Aorta (tissue), 5 donors: ENCODE measurements at regions of chr22 and their contacts with region 1.

Region 1: DNA sequence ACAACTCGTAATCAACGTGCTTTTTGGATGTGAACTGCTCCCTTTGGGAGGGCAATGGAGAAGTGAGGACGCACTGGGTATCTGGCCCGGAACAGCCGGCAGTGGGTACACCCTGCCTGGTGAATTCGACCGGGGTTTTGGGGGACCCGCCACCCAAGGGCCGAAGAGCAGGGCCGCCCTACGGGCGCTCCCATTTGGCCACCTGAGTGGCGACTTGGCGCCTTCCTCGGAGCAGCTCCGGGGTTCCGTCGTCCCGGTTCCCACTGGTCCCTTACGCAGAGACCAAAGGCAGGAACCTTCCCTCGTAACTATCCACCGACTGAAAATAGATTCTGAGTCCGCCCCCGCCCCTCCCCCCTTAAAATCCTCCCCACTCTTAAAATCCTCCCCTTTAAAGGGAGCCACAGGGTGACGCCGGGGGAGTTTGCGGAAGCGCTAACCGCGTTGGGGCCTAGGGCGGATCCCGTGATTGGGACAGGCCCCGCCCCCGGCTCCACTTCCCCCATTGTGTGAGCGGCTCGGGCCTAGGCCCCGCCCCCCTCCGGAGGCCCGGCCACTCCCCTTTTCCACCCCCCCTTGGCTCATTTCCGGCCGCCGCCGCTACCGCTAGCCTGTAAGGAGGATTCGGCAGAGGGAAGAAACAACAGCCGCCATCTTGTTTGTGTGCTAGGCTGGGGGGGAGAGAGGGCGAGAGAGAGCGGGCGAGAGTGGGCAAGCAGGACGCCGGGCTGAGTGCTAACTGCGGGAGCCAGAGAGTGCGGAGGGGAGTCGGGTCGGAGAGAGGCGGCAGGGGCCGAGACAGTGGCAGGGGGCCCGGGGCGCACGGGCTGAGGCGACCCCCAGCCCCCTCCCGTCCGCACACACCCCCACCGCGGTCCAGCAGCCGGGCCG is 1.0 kb upstream of the EP300 start:
- DNase-seq: peak; percentile 99 to 100
- ATAC-seq: peak; percentile 98
- H3K4me3 ChIP-seq: peak overlapping the region; percentile 98 to 100
- H3K27ac ChIP-seq: peak overlapping the region; percentile 98 to 99
- H3K4me1 ChIP-seq: peaks cover 0 to 3% of the 10 kb centered on the region in 2 donors
- H3K27me3 ChIP-seq: no peaks in the 10 kb centered on the region

Region 2: DNA sequence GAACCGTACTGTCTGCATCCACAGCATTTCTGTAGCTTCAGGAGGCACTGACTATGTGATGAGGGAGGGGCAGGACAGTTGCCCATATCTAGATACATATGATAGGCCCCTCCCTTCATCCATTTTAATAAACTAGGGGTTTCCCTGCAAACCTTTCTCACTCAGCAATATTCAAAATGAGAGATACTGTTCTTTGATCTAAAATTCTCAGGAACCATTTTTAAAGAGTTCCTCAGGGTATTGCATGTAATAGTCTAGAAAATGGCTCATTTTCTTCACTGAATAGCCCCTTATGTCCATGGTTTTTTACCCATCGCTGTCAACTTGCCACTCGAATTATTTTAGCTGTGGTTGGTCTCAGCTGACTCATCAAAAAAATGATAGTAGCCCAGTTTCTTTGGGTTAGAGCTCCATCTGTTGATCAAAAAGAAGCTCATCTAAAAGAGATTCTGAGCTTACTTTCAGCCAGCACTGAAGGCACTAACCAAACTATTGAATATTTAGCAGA is 192.5 kb before region 1 on chr22:
- intact Hi-C with region 1: no loop called
- DNase-seq: no peak
- ATAC-seq: no peak
- H3K4me3 ChIP-seq: no peak overlapping the region
- H3K27ac ChIP-seq: no peak overlapping the region
- H3K4me1 ChIP-seq: no peaks in the 10 kb centered on the region
- H3K27me3 ChIP-seq: no peaks in the 10 kb centered on the region

Region 3: DNA sequence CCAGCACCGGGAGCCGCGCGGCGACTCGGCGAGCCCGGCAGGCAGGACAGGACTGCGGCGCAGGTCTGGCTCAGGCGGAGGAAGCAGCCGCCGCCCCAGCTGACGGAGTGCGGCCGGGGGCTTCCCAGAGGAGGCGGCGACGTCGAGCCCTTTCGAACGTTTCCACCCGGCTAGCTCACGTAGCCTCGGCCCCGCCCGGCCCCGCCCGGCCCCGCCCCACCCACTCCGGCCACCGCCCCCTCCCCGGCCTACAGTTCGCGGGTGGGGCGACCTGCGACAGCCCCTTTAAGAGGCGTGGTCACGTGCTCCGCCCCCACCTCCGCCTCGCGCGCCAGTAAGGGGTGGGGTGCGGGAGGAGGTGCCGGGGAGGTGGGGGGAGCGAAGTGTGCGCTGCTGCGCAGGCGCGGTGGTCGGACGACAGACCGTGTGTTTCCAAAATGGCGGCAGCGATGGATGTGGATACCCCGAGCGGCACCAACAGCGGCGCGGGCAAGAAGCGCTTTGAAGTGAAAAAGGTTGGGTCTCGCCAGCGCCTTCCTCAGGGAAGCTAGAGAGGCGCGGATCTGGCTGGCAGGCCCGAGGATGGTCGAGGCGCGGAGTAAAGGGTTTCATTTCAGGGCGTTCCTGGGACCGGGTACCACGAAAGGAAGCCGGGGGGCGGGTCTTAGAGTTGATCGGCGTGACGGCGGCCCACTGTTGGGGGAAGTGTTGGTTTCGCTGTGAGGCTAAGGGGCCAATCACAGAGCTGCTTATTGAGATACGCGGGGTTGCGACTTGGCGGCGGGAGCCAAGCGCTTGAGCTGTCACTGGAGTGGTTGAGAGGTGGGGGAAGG is 140.2 kb before region 1 on chr22 and contains the start of gene RBX1:
- intact Hi-C with region 1: loop called (anchors 1 to 2 kb)
- DNase-seq: peak; percentile 99
- ATAC-seq: peak; percentile 99
- H3K4me3 ChIP-seq: peak within 1 kb of the TSS; percentile 84 to 87
- H3K27ac ChIP-seq: peak within 1 kb of the TSS; percentile 36 to 83
- H3K4me1 ChIP-seq: no peaks in the 10 kb centered on the region
- H3K27me3 ChIP-seq: no peaks in the 10 kb centered on the region
- total RNA-seq, gene RBX1: 36.2 to 40.8 TPM

Region 4: GRCh38 chr22:41022470-41023298 is 68.7 kb before region 1 on chr22:
- intact Hi-C with region 1: loop called in 1 of 2 experiments (anchors 1 kb)
- DNase-seq: peak; percentile 94 to 96
- ATAC-seq: peak; percentile 95
- H3K4me3 ChIP-seq: peak overlapping the region; percentile 77 to 82
- H3K27ac ChIP-seq: peak overlapping the region; percentile 31 to 70
- H3K4me1 ChIP-seq: no peaks in the 10 kb centered on the region
- H3K27me3 ChIP-seq: no peaks in the 10 kb centered on the region

Region 5: GRCh38 chr22:41197038-41197972 is 105.9 kb after region 1 on chr22:
- intact Hi-C with region 1: loop called in 1 of 2 experiments (anchors 10 kb)
- DNase-seq: peak; percentile 89 to 95
- ATAC-seq: peak; percentile 92
- H3K4me3 ChIP-seq: peak overlapping the region; percentile 29 to 58
- H3K27ac ChIP-seq: no peak overlapping the region
- H3K4me1 ChIP-seq: no peaks in the 10 kb centered on the region
- H3K27me3 ChIP-seq: no peaks in the 10 kb centered on the region

Region 6: DNA sequence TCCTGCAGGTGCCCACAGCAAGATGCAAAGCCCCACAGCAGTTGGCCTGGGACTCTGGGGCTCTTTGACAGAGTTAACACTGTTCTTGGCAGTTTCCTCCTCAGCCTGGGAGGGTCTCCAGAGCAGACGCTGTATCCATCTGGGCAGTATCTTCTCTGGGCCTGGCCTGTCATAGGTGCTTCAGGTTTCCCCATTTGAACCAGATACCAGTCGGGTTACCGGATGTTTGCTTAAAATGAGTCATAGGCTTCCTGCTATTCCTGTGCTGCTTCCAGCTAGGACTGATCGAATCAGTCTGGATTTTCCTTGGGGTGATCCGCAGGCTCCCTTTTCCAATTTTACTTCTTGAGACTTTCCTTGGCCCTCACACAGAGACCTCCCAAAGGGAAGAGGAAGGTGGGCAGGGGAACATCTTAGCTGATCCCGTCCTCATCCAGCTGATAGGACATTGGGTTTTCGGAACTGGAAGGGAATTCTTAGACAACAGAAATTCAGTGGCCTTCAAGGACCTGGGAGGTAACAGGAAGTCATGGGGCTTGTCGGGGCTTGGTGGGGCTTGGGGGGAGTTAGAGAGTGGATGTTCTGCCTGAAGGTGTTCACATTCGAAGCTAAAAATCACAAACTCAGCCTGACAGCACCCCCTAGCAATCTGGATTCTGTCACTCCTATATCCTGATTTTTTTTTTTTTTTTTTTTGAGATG is 197.0 kb after region 1 on chr22:
- intact Hi-C with region 1: no loop called
- DNase-seq: no peak
- ATAC-seq: no peak
- H3K4me3 ChIP-seq: no peak overlapping the region
- H3K27ac ChIP-seq: peak overlapping the region in 1 of 2 donors; percentile 86
- H3K4me1 ChIP-seq: no peaks in the 10 kb centered on the region
- H3K27me3 ChIP-seq: no peaks in the 10 kb centered on the region